ENCODE measurements at regions of chr5 and their contacts with region 1.

Region 1: DNA sequence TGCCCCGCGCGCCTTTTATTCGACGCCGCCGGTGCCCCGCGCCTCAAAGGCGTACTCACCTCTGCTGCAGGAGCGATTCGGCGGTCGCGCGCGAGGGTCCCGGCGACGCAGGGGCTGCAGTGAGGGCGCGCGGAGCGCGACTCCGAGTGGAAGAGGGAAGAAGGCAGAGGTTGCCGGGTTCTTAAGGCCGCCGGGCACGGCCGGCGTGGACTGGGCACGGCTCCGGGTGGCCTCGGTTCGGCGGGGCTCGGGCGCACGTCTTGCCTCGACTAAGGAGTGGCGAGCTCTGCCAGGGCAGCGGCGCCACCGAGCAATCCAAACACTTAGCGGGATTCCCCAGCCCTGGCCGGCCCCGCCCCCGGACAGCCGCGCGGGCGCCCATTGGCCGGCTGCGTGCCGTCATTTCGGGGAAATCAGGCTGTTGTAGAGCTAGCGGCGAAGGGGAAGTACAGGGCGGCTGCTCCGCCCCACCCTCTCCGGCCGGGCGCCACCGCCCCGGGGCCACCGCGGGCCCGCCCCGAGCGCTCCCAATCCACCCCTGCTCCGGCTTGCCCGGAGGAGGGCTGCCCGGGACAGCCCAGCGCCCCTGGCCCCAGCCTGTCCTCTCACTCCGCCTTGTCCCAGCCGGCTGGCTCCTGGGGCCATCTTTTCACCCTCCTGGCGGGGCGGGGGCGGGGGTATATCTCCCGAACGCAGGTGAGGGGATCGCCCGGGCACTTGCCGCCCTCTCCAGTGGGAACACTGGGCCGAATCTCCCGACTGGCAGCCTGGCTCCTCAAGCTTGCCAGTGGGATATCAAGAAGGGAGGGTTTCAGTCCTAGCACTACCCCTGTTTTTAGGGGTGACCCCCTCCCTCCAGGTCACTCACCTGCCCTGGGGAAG is at the start of gene IRF1:
- DNase-seq: no peak
- ATAC-seq: peak; percentile 94
- H3K4me3 ChIP-seq: peak within 1 kb of the TSS; percentile 83 to 88
- H3K27ac ChIP-seq: peak within 1 kb of the TSS; percentile 89
- H3K4me1 ChIP-seq: peaks cover 26% of the 10 kb centered on the region
- H3K27me3 ChIP-seq: no peaks in the 10 kb centered on the region
- CTCF ChIP-seq: no peak; the same call in 1 of the 2 replicates
- total RNA-seq, gene IRF1: 48.9 TPM

Region 2: GRCh38 chr5:132064738-132065331 is 425.9 kb before region 1 on chr5:
- CTCF ChIA-PET with region 1: no interaction called
- POLR2A ChIA-PET with region 1: no interaction called
- in situ Hi-C with region 1: no loop called
- intact Hi-C with region 1: loop called (anchors 10 kb)
- DNase-seq: peak; percentile 81
- ATAC-seq: peak; percentile 85
- H3K4me3 ChIP-seq: no peak overlapping the region
- H3K27ac ChIP-seq: no peak overlapping the region
- H3K4me1 ChIP-seq: no peaks in the 10 kb centered on the region
- H3K27me3 ChIP-seq: no peaks in the 10 kb centered on the region
- CTCF ChIP-seq: peak; percentile 95

Region 3: DNA sequence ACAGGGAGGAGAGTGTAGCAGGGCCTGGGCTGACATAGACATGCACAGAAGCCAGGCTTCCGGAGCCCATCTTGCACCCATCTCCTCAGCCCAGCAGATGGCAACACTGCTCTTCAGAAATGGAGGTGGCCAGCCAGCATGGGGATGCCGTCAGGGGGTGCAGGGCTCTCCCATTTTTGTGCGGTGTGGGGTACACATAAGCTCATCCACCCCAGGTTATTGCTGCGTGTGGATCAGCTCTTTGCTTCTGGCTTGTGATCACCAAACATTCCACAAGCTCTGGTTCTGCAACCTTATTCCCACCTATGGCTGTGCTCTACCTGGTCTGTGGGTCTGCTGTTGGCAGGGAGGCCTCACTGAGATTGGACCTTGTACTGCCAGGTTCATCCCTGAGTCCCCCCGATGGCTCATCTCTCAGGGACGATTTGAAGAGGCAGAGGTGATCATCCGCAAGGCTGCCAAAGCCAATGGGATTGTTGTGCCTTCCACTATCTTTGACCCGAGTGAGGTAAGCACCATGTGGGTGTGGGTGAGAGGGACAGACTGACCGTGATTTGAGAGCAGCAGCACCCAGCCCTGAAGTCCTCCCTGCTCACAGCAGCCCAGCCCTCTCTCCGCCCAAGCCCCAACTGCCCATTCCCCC is 104.0 kb before region 1 on chr5:
- CTCF ChIA-PET with region 1: no interaction called
- POLR2A ChIA-PET with region 1: no interaction called
- in situ Hi-C with region 1: loop called (anchors 25 kb)
- intact Hi-C with region 1: no loop called
- DNase-seq: no peak
- ATAC-seq: peak; percentile 78
- H3K4me3 ChIP-seq: no peak overlapping the region; a peak in 1 of 4 replicates
- H3K27ac ChIP-seq: peak overlapping the region; percentile 76
- H3K4me1 ChIP-seq: peaks cover 40% of the 10 kb centered on the region
- H3K27me3 ChIP-seq: no peaks in the 10 kb centered on the region
- CTCF ChIP-seq: peak; percentile 88

Region 4: DNA sequence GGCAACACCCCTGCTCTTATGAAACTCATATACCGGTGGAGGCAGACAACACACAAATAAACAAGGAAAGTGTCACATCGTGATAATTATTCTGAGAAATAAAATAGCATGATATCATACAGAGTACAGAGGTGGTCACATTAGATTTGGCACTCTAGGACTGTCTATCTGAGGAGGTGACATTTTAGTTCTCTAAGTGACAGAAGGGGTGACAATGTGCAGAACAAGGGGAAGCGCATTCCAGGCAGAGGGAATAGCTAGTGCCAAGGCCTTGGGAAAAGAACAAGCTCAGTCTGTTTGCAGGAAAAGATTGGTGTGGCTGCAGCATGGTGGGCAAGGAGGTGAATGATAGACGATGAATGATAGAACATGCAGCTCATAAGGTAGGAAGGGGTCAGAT is 12.5 kb after region 1 on chr5:
- CTCF ChIA-PET with region 1: interaction called, 10 read pairs
- POLR2A ChIA-PET with region 1: interaction called, 7 read pairs
- in situ Hi-C with region 1: no loop called
- intact Hi-C with region 1: no loop called
- DNase-seq: no peak
- ATAC-seq: no peak
- H3K4me3 ChIP-seq: no peak overlapping the region
- H3K27ac ChIP-seq: no peak overlapping the region
- H3K4me1 ChIP-seq: peaks cover 6% of the 10 kb centered on the region
- H3K27me3 ChIP-seq: no peaks in the 10 kb centered on the region
- CTCF ChIP-seq: no peak

Region 5: DNA sequence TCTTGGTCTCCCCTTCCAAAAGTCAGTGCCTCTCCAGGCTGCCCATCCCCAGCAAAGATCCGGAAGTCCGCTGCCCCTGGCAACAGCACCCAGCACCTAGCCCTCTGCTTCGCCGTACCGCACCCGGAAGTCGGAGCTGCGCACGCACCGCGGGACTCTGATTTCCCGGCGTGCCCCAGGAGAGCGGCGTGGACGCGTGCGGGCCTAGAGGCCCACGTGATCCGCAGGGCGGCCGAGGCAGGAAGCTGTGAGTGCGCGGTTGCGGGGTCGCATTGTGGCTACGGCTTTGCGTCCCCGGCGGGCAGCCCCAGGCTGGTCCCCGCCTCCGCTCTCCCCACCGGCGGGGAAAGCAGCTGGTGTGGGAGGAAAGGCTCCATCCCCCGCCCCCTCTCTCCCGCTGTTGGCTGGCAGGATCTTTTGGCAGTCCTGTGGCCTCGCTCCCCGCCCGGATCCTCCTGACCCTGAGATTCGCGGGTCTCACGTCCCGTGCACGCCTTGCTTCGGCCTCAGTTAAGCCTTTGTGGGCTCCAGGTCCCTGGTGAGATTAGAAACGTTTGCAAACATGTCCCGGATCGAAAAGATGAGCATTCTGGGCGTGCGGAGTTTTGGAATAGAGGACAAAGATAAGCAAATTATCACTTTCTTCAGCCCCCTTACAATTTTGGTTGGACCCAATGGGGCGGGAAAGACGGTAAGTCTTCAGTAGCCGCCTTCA is 66.2 kb after region 1 on chr5 and contains the start of gene RAD50:
- CTCF ChIA-PET with region 1: no interaction called
- POLR2A ChIA-PET with region 1: interaction called, 12 read pairs
- in situ Hi-C with region 1: no loop called
- intact Hi-C with region 1: no loop called
- DNase-seq: peak; percentile 91
- ATAC-seq: peak; percentile 98
- H3K4me3 ChIP-seq: peak within 1 kb of the TSS; percentile 69 to 88
- H3K27ac ChIP-seq: peak within 1 kb of the TSS; percentile 96
- H3K4me1 ChIP-seq: peaks cover 13% of the 10 kb centered on the region; the same call in 1 of the 2 replicates
- H3K27me3 ChIP-seq: no peaks in the 10 kb centered on the region
- CTCF ChIP-seq: no peak
- total RNA-seq, gene RAD50: 77.6 TPM

Measured in Panc1 (cell line).